CD4-positive, alpha-beta memory T cell (primary cell): ENCODE measurements at regions of chr5 and their contacts with region 1.

Region 1: GRCh38 chr5:140401362-140402257 is at the start of gene ANKHD1:
- DNase-seq: peak; percentile 96 to 100 (median 99)
- H3K4me3 ChIP-seq: peak within 1 kb of the TSS; percentile 90 to 99
- H3K4me3 Mint-ChIP-seq: no peak within 1 kb of the TSS
- H3K27ac ChIP-seq: peak within 1 kb of the TSS; percentile 90
- H3K27ac Mint-ChIP-seq: no peak within 1 kb of the TSS
- H3K4me1 ChIP-seq: peaks cover 45% of the 10 kb centered on the region
- H3K4me1 Mint-ChIP-seq: peaks cover 23 to 45% (median 33%) of the 10 kb centered on the region in 4 donors
- H3K27me3 ChIP-seq: no peaks in the 10 kb centered on the region
- H3K27me3 Mint-ChIP-seq: no peaks in the 10 kb centered on the region
- total RNA-seq, gene ANKHD1: 228 to 252 TPM

Region 2: GRCh38 chr5:140107312-140108083 is 294.1 kb before region 1 on chr5:
- CTCF ChIA-PET with region 1: no interaction called
- POLR2A ChIA-PET with region 1: interaction called, 6 read pairs
- intact Hi-C with region 1: loop called (anchors 1 kb)
- DNase-seq: peak; percentile 95 to 96 (median 95)
- H3K4me3 ChIP-seq: peak overlapping the region; percentile 77 to 88
- H3K4me3 Mint-ChIP-seq: peak overlapping the region; percentile 92 to 100 (median 97)
- H3K27ac ChIP-seq: peak overlapping the region; percentile 94
- H3K27ac Mint-ChIP-seq: peak overlapping the region; percentile 97 to 100 (median 99)
- H3K4me1 ChIP-seq: peaks cover 47% of the 10 kb centered on the region
- H3K4me1 Mint-ChIP-seq: peaks cover 19 to 51% (median 39%) of the 10 kb centered on the region in 4 donors
- H3K27me3 ChIP-seq: no peaks in the 10 kb centered on the region
- H3K27me3 Mint-ChIP-seq: no peaks in the 10 kb centered on the region

Region 3: GRCh38 chr5:140424135-140424534 is 22.5 kb after region 1 on chr5:
- CTCF ChIA-PET with region 1: interaction called, 3 read pairs
- POLR2A ChIA-PET with region 1: interaction called, 14 read pairs
- intact Hi-C with region 1: no loop called
- DNase-seq: no peak
- H3K4me3 ChIP-seq: no peak overlapping the region
- H3K4me3 Mint-ChIP-seq: no peak overlapping the region
- H3K27ac ChIP-seq: no peak overlapping the region
- H3K27ac Mint-ChIP-seq: no peak overlapping the region
- H3K4me1 ChIP-seq: peaks cover 43% of the 10 kb centered on the region
- H3K4me1 Mint-ChIP-seq: peaks cover 44 to 65% (median 49%) of the 10 kb centered on the region in 4 donors
- H3K27me3 ChIP-seq: no peaks in the 10 kb centered on the region
- H3K27me3 Mint-ChIP-seq: no peaks in the 10 kb centered on the region

Region 4: GRCh38 chr5:140564196-140565023 is 162.8 kb after region 1 on chr5 and contains the starts of genes APBB3 and SLC35A4:
- CTCF ChIA-PET with region 1: no interaction called
- POLR2A ChIA-PET with region 1: interaction called, 23 read pairs
- intact Hi-C with region 1: loop called (anchors 1 kb)
- DNase-seq: peak; percentile 97 to 100 (median 99)
- H3K4me3 ChIP-seq: peak within 1 kb of the TSS; percentile 85
- H3K4me3 Mint-ChIP-seq: peak within 1 kb of the TSS; percentile 91 to 99 (median 95)
- H3K27ac ChIP-seq: peak within 1 kb of the TSS; percentile 91
- H3K27ac Mint-ChIP-seq: peak within 1 kb of the TSS; percentile 91 to 100 (median 98)
- H3K4me1 ChIP-seq: peaks cover 42% of the 10 kb centered on the region
- H3K4me1 Mint-ChIP-seq: peaks cover 34 to 66% (median 53%) of the 10 kb centered on the region in 4 donors
- H3K27me3 ChIP-seq: no peaks in the 10 kb centered on the region
- H3K27me3 Mint-ChIP-seq: no peaks in the 10 kb centered on the region
- total RNA-seq, gene APBB3: 72.9 to 75.4 TPM
- total RNA-seq, gene SLC35A4: 49.0 to 59.4 TPM

Region 5: GRCh38 chr5:140647042-140647341 is 245.4 kb after region 1 on chr5:
- CTCF ChIA-PET with region 1: no interaction called
- POLR2A ChIA-PET with region 1: interaction called, 50 read pairs
- intact Hi-C with region 1: loop called (anchors 1 kb)
- DNase-seq: no peak
- H3K4me3 ChIP-seq: peak overlapping the region; percentile 63 to 92
- H3K4me3 Mint-ChIP-seq: peak overlapping the region; percentile 97 to 100 (median 100)
- H3K27ac ChIP-seq: peak overlapping the region; percentile 92
- H3K27ac Mint-ChIP-seq: peak overlapping the region; percentile 91 to 100 (median 100)
- H3K4me1 ChIP-seq: peaks cover 40% of the 10 kb centered on the region
- H3K4me1 Mint-ChIP-seq: peaks cover 27 to 70% (median 48%) of the 10 kb centered on the region in 4 donors
- H3K27me3 ChIP-seq: no peaks in the 10 kb centered on the region
- H3K27me3 Mint-ChIP-seq: no peaks in the 10 kb centered on the region

Region 6: GRCh38 chr5:140700177-140701144 is 298.9 kb after region 1 on chr5 and contains the start of gene ZMAT2:
- CTCF ChIA-PET with region 1: no interaction called
- POLR2A ChIA-PET with region 1: interaction called, 29 read pairs
- intact Hi-C with region 1: loop called (anchors 1 kb)
- DNase-seq: peak; percentile 89 to 98 (median 94)
- H3K4me3 ChIP-seq: peak within 1 kb of the TSS; percentile 48 to 91
- H3K4me3 Mint-ChIP-seq: peak within 1 kb of the TSS; percentile 95 to 99 (median 98)
- H3K27ac ChIP-seq: peak within 1 kb of the TSS; percentile 80
- H3K27ac Mint-ChIP-seq: peak within 1 kb of the TSS; percentile 91 to 99 (median 98)
- H3K4me1 ChIP-seq: peaks cover 18% of the 10 kb centered on the region
- H3K4me1 Mint-ChIP-seq: peaks cover 17 to 31% (median 23%) of the 10 kb centered on the region in 4 donors
- H3K27me3 ChIP-seq: no peaks in the 10 kb centered on the region
- H3K27me3 Mint-ChIP-seq: no peaks in the 10 kb centered on the region
- total RNA-seq, gene ZMAT2: 56.3 to 57.4 TPM